ENCODE measurements at regions of chr3 and their contacts with region 1.

Region 1: DNA sequence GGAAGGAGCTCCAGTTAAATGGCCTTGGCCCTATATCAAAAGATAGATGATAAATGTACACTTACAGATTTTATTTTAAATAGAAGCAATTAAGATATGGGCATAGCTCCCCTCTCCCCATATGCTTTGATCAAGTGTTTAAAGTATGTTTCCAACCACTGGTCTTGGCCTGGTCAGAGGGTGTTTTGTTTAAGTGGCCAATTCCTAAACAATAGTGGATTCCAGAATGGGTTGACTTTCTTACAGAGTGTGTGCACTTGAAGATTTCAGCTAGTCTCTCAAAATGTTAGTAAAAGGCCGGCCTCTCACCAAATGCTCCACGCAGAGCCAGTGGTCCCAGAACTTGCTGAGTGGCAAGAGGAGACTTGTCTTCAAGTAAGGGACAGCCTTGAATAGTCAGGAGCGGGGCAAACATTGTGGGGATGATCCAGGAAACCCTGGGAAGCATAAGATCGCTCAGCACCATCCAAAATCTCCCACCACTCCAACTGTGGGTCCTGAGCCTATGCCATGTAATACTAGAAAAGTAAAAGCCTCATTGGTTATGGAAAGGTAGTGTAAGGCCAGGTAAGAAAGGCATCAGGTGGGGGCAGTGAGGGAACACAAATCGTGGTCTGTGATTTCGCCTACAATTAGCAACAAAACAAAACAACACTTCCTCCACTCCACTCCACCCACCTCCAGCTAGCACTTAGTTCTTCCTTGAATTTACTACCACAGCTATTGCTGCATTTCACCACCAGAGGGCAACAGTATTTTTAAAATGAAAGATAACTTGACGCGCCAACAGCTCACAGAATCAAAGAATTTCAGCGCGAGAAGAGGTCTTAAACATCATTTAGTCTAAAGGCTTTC is 4.8 kb downstream of the RARRES1 start:
- DNase-seq: peak; percentile 64
- H3K4me3 Mint-ChIP-seq: no peak overlapping the region
- H3K27ac Mint-ChIP-seq: no peak overlapping the region
- H3K4me1 Mint-ChIP-seq: peaks cover 36% of the 10 kb centered on the region
- H3K27me3 Mint-ChIP-seq: peaks cover 11% of the 10 kb centered on the region

Region 2: GRCh38 chr3:158644345-158644908 is 83.0 kb before region 1 on chr3 and contains the start of gene GFM1:
- CTCF ChIA-PET with region 1: interaction called, 12 read pairs
- DNase-seq: peak; percentile 93
- H3K4me3 Mint-ChIP-seq: peak within 1 kb of the TSS; percentile 93
- H3K27ac Mint-ChIP-seq: peak within 1 kb of the TSS; percentile 81
- H3K4me1 Mint-ChIP-seq: peaks cover 30% of the 10 kb centered on the region
- H3K27me3 Mint-ChIP-seq: no peaks in the 10 kb centered on the region

Region 3: DNA sequence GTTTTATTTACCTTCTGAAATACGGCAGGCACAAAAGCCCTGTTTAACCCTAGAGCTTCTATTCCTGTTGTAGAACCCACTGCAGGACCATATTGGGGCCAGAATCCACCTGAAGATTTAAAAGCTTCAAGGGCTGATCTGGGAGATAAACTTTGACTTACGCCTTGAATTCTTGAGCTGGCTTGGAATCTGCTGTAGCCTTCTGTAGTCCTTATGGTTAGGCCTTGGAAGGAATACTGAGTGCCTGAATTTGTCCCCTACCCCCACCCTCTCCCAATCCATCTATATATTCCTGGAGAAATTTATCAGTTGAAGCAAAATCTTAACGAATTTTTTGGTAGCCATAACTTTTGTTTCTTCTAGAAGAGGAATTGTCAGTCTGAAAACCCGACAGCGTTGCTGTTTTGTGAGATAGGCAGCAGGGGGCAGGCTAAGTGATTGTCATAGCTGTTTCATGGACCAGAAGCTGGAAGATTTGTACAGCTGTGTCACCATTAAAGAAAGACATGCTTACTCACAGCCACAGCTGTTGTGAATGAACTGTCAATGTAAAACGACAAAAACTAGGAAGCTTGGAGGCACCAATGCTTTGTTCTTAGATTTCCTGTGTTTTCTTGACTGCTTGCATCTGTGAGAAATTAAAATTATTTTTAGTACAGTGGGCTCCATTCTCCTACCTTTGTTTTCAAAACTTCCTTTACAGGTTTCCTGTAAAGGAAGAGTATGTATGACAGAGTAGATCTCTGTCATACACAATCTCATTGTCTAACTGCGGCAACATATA is 67.8 kb before region 1 on chr3:
- CTCF ChIA-PET with region 1: interaction called, 28 read pairs
- DNase-seq: peak; percentile 66
- H3K4me3 Mint-ChIP-seq: no peak overlapping the region
- H3K27ac Mint-ChIP-seq: no peak overlapping the region
- H3K4me1 Mint-ChIP-seq: peaks cover 8% of the 10 kb centered on the region
- H3K27me3 Mint-ChIP-seq: no peaks in the 10 kb centered on the region

Region 4: DNA sequence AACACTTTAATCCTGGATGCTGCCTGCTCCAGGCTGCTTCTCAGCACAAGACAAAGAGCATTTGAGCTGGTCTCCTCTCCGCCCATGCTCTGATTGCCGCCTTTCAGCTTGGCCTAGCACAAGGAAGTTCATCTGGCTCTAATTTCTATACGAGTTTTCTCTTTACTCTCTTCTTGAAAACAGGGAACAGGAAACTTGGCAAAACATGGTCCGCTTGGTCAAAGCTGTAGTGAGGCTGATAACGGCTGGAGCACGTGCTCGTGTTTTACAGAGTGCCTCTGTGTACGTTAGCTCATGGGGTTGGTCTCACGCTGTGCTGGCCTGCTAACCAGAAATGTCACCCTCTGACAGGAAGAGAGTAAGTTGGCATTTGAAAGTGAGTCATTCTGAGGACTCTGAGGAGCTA is 14.3 kb before region 1 on chr3:
- CTCF ChIA-PET with region 1: interaction called, 11 read pairs
- DNase-seq: no peak
- H3K4me3 Mint-ChIP-seq: no peak overlapping the region
- H3K27ac Mint-ChIP-seq: no peak overlapping the region
- H3K4me1 Mint-ChIP-seq: peaks cover 3% of the 10 kb centered on the region
- H3K27me3 Mint-ChIP-seq: no peaks in the 10 kb centered on the region

Region 5: DNA sequence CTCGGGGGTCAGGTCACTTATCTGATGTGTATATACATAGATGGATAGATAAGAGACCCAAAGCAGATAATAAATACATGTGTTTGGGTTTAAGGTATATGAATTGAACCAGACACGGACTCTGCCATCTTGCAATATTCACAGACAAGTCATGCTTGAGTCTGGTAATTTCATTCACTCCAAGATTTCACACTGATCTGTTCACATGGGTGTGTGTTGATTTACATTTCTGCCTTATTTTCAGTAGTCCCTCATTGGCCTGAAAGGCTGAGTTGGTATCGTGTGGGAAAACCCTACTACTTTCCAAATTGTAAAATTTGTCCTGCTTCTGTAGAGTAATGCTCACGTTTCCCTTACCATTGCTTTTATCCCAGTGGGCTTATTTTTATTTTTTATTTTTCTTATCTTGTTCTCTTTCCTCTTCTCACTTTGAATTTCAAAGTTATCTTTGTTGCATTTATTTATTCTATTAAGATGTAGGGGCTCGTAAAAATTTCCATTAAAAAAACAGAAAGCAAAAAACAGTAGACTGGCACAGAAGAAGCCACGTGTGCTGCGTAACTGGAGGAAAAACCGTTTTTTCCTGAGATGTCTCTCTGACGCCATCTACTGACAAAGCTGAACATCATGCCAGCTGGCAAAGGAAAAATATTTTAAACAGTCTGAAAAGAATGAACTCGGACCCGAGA is 63.6 kb after region 1 on chr3:
- CTCF ChIA-PET with region 1: interaction called, 87 read pairs
- DNase-seq: peak; percentile 47
- H3K4me3 Mint-ChIP-seq: no peak overlapping the region
- H3K27ac Mint-ChIP-seq: no peak overlapping the region
- H3K4me1 Mint-ChIP-seq: peaks cover 4% of the 10 kb centered on the region
- H3K27me3 Mint-ChIP-seq: peaks cover 11% of the 10 kb centered on the region

Region 6: DNA sequence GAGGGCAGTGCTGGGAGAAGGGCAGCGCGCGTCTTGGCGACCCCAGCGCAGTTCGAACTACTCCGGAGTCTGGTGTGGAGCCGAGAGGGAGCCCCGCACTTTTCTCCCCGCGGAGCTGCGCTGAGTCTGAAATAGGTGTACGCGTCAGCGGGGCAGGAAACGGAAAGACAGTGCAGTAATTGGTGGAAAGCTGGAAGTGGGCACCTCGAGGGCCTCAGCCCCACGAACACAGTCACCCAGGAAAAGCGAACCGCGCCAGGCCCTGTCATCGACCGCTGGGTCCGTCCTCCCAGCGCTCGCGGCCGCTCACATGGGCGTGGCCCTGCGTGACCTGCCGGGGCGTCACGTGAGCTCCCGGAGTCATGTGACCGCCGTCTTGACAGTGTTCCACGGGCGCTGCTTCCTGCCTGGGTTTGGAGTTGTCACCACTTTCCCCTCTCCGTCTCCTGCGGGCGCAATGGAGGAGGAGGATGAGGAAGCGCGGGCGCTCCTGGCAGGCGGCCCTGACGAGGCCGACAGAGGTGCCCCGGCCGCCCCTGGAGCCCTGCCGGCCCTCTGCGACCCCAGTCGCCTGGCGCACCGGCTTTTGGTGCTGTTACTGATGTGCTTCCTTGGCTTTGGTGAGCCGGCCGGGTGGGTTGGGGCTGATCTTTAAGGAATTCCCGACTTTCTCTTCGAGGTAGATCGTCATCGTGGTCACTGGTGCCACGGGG is 74.4 kb after region 1 on chr3 and contains the start of gene MFSD1:
- CTCF ChIA-PET with region 1: interaction called, 19 read pairs
- DNase-seq: peak; percentile 94
- H3K4me3 Mint-ChIP-seq: peak within 1 kb of the TSS; percentile 84
- H3K27ac Mint-ChIP-seq: peak within 1 kb of the TSS; percentile 86
- H3K4me1 Mint-ChIP-seq: peaks cover 30% of the 10 kb centered on the region
- H3K27me3 Mint-ChIP-seq: peaks cover 20% of the 10 kb centered on the region